Activated T-helper 1 cell treated with anti-CD3 and anti-CD28 coated beads, Interleukin-12 subunit alpha, Interleukin-12 subunit beta, Interleukin-2, Interleukin-4 antibody, amounts not matched to agents 30 ng/mL and 10 ng/mL and 1 ng/mL, durations not matched to agents 14 hours and 24 hours and 36 hours (primary cell): ENCODE measurements at regions of chr10 and their contacts with region 1.

Region 1: GRCh38 chr10:43689955-43690771 is 41.5 kb upstream of the ZNF32 start:
- DNase-seq: peak; percentile 79
- H3K4me3 Mint-ChIP-seq: peak overlapping the region; percentile 82
- H3K27ac Mint-ChIP-seq: peak overlapping the region; percentile 5
- H3K4me1 Mint-ChIP-seq: no peaks in the 10 kb centered on the region
- H3K27me3 Mint-ChIP-seq: peaks cover 34% of the 10 kb centered on the region

Region 2: DNA sequence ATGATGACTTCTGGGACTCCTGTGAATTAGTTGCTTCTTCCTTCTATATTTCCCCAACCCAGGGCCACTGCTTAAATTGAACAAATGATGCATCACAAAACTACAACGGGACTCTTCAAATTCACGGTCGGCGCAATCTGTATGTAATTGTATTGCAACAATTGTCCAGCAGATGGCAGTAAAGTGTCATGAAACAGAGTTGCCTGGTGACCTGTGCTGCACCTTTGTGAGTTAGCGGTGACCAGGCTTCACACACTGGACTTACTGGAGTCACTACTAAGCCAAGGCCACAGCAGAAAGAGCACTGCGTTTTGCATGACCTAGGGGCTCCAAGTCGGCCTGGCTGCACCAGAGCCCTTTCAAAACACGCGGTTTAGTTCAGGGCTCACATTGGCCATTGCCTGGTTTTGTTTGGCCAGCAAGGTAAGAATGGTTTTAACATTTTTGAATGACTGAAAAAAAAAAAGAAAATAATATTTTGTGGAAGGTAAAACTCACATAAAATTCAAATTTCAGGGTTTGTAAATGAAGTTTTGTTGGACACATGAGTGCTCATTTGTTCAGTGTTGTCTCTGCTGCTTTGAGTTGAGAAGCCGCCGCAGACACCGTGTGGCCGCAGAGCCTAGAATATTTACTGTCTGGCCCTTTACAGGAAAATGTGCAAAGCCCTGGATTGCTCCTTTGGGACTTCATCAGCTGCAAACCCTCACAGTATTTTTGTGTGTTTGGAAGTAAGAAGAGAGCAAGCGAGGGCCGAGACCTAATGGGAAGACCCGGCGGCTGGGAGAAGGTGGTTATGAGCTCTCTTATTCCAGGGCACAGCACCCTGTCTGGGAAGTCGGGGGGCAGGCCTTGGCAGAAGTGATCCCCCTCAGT is 18.3 kb before region 1 on chr10:
- intact Hi-C with region 1: loop called (anchors 1 kb)
- DNase-seq: peak; percentile 27
- H3K4me3 Mint-ChIP-seq: no peak overlapping the region
- H3K27ac Mint-ChIP-seq: no peak overlapping the region
- H3K4me1 Mint-ChIP-seq: peaks cover 7% of the 10 kb centered on the region
- H3K27me3 Mint-ChIP-seq: peaks cover 27% of the 10 kb centered on the region

Region 3: DNA sequence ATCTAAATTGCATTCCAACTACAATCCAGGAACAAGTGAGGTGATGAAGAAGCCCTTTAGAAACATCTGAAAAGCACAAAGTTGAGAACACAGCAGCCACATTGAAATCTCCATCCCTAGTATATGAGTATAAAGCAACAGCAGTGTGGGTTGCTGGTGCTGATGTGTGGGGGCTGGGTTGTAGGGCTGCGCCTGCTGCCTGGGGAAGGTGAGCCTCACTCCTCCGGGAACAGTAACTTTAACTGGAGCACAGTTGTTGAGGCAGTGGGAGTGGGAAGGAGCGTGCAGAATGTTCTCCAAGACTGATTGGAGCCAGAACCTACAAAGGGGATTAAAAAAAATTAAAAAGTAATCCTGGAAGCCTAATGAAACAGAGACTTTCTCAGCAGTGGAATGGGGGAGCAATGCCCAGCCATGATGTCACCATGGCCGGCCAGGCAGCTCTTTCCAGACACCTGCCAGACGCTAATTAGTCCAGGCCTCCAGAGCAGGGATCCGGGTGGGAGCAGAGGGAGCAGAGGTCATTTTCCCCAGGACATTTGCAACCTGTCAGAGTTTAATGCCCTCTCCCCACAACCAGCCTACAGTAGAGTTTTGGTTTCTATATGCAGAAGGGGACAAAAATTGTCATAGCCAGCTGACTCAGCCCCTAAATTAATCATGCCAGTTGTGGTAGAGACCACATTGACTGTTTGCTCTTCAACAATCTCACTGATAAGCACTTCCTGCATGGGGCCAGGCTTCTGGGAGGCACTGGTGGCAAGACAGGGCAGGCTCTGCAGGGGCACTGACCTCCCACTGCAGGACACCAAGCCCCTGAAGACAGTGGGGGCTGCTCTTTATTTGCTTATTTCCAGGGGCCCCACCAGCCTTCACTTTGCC is 91.6 kb after region 1 on chr10:
- intact Hi-C with region 1: loop called (anchors 2 kb)
- DNase-seq: no peak
- H3K4me3 Mint-ChIP-seq: no peak overlapping the region
- H3K27ac Mint-ChIP-seq: no peak overlapping the region
- H3K4me1 Mint-ChIP-seq: peaks cover 25% of the 10 kb centered on the region
- H3K27me3 Mint-ChIP-seq: peaks cover 4% of the 10 kb centered on the region

Region 4: GRCh38 chr10:43816351-43817321 is 126.5 kb after region 1 on chr10:
- intact Hi-C with region 1: loop called (anchors 5 kb)
- DNase-seq: peak; percentile 74
- H3K4me3 Mint-ChIP-seq: peak overlapping the region; percentile 70
- H3K27ac Mint-ChIP-seq: peak overlapping the region; percentile 69
- H3K4me1 Mint-ChIP-seq: peaks cover 30% of the 10 kb centered on the region
- H3K27me3 Mint-ChIP-seq: peaks cover 32% of the 10 kb centered on the region

Region 5: GRCh38 chr10:43981232-43981631 is 291.1 kb after region 1 on chr10:
- intact Hi-C with region 1: no loop called
- DNase-seq: no peak
- H3K4me3 Mint-ChIP-seq: no peak overlapping the region
- H3K27ac Mint-ChIP-seq: no peak overlapping the region
- H3K4me1 Mint-ChIP-seq: no peaks in the 10 kb centered on the region
- H3K27me3 Mint-ChIP-seq: no peaks in the 10 kb centered on the region

Region 6: DNA sequence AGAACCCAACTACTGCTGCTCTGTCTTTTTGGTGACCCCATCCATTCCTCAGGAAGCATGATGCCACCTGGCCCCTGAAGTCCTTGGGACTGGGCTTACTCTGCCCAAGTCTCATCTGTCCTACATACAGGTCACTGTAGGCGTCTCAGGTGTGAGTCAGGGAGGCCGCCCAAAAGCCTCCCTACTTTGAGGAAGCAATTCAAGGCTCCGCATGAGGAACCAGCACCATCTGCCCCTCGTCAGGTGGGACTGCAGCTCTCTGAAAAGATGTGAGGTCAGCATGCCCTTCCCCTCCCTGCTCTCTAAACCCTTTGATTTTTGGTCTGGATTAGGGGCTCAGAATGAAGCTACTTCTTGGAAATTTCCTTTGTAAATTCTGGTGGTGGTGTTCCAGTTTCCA is 340.0 kb after region 1 on chr10:
- intact Hi-C with region 1: loop called (anchors 1 kb)
- DNase-seq: no peak
- H3K4me3 Mint-ChIP-seq: no peak overlapping the region
- H3K27ac Mint-ChIP-seq: no peak overlapping the region
- H3K4me1 Mint-ChIP-seq: no peaks in the 10 kb centered on the region
- H3K27me3 Mint-ChIP-seq: peaks cover 10% of the 10 kb centered on the region

Region 7: DNA sequence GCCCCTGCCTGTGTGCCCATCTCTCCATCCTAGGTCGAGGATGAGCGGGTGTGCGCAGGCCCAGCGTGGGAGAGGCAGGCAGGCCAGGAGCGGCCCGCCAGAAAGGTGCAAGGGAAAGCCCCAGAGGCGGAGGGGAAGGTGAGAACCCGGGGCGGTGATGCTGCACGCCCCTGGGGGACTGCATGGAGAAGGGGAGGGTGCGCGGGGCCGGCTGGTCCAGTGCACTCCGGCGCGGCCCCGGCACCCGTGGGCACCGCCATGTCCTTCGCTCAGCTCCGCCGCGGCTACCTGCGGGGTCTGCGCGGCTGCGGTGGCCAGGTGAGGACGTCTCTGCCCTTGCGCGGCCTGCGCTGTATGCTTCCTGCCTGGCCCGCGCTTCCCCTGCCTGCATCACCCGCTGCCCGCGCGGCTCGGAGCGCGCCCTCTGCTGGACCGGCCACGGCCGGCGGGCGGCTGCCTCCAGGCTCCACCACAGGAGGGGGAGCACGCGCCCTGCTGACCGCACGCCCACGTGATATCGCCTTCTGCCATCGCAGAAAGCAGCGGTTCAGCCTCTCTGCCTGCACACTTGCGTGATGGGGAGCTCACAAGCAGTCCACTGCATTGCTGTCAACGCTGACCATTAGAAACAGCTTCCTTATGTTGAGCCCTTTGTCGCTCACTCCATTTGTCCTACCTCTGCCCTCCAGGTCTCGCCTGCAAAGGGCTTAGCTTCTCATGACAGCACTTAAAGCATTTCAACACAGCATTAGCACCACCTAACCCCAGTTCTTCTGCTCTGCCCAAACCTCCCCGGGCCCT is 620.8 kb after region 1 on chr10:
- intact Hi-C with region 1: loop called (anchors 1 kb)
- DNase-seq: peak; percentile 48
- H3K4me3 Mint-ChIP-seq: no peak overlapping the region
- H3K27ac Mint-ChIP-seq: no peak overlapping the region
- H3K4me1 Mint-ChIP-seq: peaks cover 5% of the 10 kb centered on the region
- H3K27me3 Mint-ChIP-seq: peaks cover 5% of the 10 kb centered on the region

Region 8: DNA sequence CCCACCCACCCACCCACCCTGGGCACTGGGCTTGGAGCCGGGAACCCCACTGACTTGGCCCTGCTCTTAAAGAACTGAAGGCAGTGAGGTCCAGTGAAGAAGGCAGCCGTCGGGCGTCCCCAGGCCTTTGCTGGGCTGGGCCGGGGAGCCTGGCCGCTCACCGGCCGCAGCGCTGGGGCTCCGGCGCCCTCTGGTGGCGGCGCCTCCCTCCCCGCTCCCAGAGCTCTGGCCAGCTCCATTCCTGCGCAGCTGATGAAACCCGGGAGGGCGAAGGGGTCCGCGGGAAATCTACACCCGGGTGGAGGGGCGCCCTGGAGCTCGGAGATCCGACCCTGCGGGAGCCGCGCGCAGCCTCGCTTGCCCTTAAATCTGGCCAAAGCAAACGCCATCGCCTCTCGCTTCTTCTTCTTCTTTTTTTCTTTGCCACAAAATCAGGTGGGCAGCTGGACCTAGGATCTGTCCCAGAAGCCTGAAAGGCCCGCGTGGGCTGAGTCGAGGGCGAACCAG is 696.4 kb after region 1 on chr10:
- intact Hi-C with region 1: loop called (anchors 1 kb)
- DNase-seq: no peak
- H3K4me3 Mint-ChIP-seq: no peak overlapping the region
- H3K27ac Mint-ChIP-seq: no peak overlapping the region
- H3K4me1 Mint-ChIP-seq: no peaks in the 10 kb centered on the region
- H3K27me3 Mint-ChIP-seq: peaks cover 26% of the 10 kb centered on the region